Activated naive CD4-positive, alpha-beta T cell treated with anti-CD3 and anti-CD28 coated beads for 36 hours (primary cell): ENCODE measurements at regions of chr19 and their contacts with region 1.

Region 1: DNA sequence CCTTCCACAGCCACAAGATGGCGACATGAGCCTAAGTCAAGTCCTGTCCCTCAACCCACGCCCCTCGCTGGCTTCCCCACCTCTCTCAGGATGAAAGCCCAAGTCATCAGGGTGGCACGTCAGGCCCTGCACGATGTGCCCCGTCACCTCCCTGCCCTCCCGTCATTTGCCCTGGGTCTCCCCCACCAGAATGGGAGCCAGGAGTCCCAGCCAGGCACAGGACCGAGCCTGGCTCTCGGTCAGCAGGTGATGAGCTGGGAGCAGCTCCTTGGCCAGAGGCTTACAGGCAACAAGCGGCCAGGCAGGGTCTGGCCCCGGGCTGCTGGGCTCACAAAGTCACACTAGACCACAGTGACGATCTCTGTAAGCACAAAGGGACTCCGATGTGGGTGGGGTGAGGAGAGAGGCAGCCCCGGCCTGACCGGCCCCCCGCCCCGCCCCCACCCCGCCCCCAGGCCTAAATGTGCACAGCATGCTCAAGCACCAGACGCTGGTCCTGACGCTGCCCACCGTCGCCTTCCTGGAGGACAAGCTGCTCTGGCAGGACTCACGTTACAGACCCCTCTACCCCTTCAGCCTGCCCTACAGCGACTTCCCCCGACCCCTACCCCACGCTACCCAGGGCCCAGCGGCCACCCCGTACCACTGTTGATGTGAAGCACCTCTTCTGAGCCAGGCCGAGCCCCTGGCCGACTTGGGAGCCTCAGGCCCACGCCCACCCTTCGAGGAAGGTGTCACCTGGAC is 7.3 kb downstream of the MRPL4 start:
- DNase-seq: peak; percentile 99
- H3K4me3 Mint-ChIP-seq: no peak overlapping the region
- H3K27ac Mint-ChIP-seq: peak overlapping the region; percentile 81
- H3K4me1 Mint-ChIP-seq: peaks cover 25% of the 10 kb centered on the region
- H3K27me3 Mint-ChIP-seq: no peaks in the 10 kb centered on the region

Region 2: GRCh38 chr19:10292206-10292788 is 33.0 kb after region 1 on chr19:
- CTCF ChIA-PET with region 1: interaction called, 13 read pairs
- intact Hi-C with region 1: no loop called
- DNase-seq: peak; percentile 80
- H3K4me3 Mint-ChIP-seq: peak overlapping the region; percentile 52
- H3K27ac Mint-ChIP-seq: no peak overlapping the region
- H3K4me1 Mint-ChIP-seq: peaks cover 66% of the 10 kb centered on the region
- H3K27me3 Mint-ChIP-seq: peaks cover 77% of the 10 kb centered on the region

Region 3: DNA sequence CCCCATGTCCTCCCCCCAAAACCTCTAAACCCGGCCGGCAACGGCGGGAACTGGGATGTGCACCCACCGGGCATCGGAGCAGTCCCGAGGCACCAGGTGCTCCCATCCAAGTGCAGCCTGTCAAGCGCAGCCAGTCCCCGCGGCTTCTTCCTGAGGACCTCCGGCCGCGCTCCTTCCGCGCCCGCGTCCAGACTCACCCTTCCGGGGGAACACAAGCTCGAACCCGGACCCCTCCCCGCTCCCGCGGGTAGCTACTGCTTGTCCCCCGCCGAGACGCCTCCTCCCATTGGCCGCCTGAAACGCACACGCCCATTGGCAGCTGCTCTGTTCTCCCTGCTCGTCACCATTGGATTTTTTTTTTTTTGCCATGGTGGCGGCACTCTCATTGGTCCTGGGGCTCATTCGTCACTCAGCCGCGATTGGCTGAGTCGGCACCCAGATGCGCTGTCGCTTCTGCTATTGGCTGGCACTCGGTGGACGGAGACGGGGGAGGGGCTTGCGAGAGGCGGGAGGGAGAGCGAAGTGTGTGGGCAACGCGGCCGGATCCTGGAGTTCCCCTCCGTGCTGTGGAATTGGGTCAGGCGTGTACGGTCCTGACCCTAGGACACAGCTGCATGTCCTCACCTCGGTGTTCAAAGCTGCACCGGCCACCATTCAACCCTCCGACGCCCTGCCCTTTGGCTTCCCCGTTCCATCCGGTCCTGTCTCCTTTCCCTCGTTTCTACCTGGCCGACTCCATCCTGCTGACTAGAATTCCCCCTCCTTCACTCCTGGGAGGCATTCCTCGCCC is 121.2 kb after region 1 on chr19 and contains the start of gene TYK2:
- CTCF ChIA-PET with region 1: interaction called, 70 read pairs
- intact Hi-C with region 1: loop called (anchors 2 kb)
- DNase-seq: peak; percentile 97
- H3K4me3 Mint-ChIP-seq: peak within 1 kb of the TSS; percentile 87
- H3K27ac Mint-ChIP-seq: peak within 1 kb of the TSS; percentile 91
- H3K4me1 Mint-ChIP-seq: peaks cover 19% of the 10 kb centered on the region
- H3K27me3 Mint-ChIP-seq: no peaks in the 10 kb centered on the region
- total RNA-seq, gene TYK2: 175 to 190 TPM

Region 4: DNA sequence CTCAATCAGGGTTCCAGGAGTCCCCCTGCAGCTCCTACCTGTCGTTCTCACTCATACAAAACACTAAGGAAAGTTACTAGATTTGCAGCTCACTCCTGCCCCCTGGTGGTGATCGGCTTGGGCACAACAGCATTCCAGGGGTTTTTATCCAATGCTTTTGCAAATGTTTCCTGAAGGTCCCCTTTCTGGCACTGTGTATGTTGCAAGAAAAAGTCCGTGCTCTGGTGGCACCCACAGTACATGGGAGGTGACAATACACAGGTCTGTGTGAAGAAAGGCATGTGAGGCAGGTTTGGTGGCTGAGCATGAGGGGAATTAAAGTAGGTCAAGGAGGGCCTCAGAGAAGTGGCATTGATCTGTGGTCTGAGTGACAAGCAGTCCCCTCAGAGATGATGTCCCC is 129.6 kb after region 1 on chr19:
- CTCF ChIA-PET with region 1: interaction called, 70 read pairs
- intact Hi-C with region 1: loop called (anchors 1 kb)
- DNase-seq: peak; percentile 91
- H3K4me3 Mint-ChIP-seq: no peak overlapping the region
- H3K27ac Mint-ChIP-seq: no peak overlapping the region
- H3K4me1 Mint-ChIP-seq: no peaks in the 10 kb centered on the region
- H3K27me3 Mint-ChIP-seq: no peaks in the 10 kb centered on the region

Region 5: DNA sequence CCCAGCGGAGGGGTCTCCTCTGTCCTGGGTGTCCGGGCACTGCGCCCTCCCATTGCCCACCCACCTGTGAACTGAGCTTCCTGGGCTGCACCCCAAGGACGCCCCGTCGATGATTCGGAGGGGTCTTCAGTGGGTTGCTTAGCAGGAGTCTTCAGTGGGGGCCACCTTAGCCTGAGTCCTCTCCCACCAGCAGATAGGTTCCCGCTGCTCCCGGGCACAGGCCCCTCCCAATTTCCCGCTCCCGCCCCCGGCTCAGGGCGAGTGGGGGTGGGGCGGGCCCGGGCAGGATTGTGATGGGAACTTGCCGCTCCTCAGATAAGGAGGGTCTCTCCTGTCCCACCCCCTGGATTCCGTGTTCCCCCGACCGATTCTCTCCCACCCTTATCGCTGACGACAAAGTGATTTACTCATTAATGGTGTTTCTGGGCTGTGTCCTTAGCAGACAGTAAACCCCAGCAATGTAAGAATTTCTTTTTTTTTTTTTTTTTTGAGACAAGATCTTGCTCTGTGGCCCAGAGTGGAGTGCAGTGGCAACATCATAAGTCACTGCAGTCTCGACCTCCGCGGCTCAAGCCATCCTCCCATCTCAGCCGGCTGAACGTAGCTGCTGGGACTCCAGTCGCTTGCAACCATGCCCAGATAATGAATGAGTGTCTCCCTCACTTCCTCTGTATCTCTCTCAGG is 258.6 kb after region 1 on chr19:
- CTCF ChIA-PET with region 1: no interaction called
- intact Hi-C with region 1: no loop called
- DNase-seq: no peak
- H3K4me3 Mint-ChIP-seq: peak overlapping the region; percentile 42
- H3K27ac Mint-ChIP-seq: no peak overlapping the region
- H3K4me1 Mint-ChIP-seq: peaks cover 24% of the 10 kb centered on the region
- H3K27me3 Mint-ChIP-seq: peaks cover 60% of the 10 kb centered on the region